ENCODE measurements at regions of chr2 and their contacts with region 1.

Region 1: DNA sequence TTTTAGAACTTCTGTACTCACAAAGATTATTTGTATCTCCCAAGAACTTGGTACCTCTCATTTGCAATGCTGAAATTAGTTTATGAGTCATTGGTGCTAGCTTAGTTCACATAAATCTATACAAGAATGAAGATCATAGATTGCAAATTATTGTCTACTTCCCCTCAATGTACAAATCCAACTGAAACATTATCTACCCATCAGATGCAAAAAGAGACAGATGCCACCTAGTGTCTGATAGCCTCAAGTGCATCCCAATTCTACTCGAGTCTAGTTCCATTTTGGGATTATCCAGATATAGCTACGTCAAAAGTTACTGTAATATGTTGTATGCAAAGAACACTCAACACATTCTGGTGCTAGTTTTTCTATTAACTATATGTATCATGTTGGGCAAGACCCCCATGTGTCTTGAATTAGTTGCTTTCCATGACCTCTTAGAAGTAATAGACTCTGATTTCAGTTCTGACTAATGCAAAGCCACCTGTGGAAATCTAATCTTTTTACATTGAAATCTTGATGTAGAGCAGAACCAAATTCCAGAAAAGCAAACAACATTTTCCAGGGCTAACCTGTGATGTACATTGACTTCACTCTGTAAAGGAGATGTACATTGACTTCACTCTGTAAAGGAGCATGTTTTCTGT is 210.0 kb downstream of the RBM43 start:
- DNase-seq: no peak
- H3K4me3 ChIP-seq: no peak overlapping the region
- CTCF ChIP-seq: peak; percentile 72

Region 2: DNA sequence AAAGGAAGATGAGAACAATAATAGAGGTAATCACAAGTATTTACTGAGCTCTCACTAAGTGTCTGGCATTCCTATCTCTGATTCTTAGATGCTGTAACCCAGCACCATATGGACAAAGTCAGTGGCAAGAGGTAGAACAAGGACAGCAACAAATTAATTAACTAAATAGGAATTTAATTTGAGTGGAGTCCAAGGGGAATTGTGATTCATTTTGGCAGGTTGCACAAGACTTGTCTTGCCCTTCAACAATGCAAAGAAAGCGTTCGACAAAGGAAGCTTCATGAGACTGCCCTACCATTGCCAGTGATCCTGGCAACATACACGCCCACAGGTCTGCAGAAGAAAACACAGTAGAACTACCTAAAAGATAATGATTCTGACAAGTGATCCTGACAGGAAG is 11.7 kb before region 1 on chr2:
- CTCF ChIA-PET with region 1: interaction called, 21 read pairs
- POLR2A ChIA-PET with region 1: no interaction called
- DNase-seq: no peak
- H3K4me3 ChIP-seq: no peak overlapping the region
- CTCF ChIP-seq: no peak

Region 3: DNA sequence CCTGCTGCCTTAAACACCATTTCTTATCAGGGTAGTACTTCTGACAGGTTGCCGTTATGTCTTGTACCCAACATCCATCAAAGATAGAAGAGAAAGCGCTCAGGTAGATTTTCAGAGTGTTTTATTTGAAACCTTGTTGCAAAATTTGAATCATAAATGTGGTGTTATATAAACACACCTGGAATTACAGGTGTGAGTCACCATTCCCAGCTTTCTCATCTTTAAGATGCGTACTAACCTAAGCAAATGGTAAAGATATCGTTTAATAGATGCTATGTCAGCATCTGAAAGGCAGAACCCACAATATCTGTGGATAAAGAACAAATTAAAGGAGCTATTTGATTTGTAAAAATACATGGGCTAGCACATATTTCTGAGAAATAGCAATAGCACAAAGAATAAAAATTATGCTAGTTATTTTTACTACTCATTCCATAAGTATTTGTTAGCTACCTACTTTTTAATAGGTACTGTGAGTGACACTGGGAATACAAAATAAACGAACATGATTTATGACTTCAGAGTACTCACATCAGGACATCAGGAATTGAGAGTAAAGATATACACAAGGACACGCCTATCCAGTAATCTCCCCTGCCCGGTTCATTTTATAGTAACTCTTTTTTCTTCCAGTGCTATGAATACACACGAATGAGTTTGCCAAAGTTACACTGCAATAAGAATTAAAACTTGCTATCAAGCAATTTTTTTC is 16.1 kb after region 1 on chr2:
- CTCF ChIA-PET with region 1: interaction called, 21 read pairs
- POLR2A ChIA-PET with region 1: no interaction called
- DNase-seq: no peak
- H3K4me3 ChIP-seq: no peak overlapping the region
- CTCF ChIP-seq: no peak

Region 4: GRCh38 chr2:151106805-151107506 is 55.3 kb after region 1 on chr2:
- CTCF ChIA-PET with region 1: no interaction called
- POLR2A ChIA-PET with region 1: no interaction called
- DNase-seq: no peak
- H3K4me3 ChIP-seq: no peak overlapping the region
- CTCF ChIP-seq: no peak

Measured in AG04449 (cell line).